ENCODE measurements at regions of chr17 and their contacts with region 1.

Region 1: DNA sequence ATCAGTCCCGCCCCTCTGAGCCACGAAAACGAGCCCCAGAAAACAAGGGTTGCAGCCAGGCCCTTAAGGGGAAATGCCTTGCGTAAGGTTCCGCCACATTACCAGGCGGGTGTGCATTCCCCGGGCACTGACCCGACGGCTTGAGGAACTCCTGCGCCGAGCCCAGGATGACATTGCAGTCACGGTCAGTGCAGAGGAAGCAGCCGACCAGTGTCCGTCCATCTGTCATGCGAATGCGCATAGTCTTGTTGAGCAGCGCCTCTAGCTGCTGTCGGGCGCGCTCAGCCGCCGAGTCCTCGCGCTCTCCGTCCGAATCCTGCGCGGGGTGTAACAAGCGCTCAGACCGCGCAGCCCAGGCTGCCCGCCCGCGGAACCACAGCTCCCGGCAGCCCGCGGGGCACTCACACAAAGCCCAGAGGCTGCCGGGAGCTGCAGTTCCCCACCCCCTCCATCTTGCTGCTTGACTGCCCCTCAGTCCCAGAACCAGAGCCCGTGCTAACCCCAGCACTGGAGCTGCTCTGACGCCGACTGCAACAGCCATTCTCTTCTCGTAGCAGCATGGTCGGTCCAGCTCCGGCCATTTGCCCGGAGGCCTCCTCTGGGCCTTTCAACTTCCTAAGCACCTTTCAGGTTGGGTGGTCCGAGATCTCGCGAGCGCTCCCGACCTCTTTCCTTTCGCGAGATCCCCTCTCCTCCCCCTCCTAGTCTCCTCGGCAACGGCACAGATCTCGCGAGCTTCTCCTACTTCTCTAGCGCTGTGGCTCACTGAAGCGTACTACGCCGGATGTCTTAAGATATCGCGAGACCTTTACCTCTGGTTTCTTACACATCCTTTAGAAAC is at the start of gene NAA38:
- DNase-seq: peak; percentile 88 to 98 (median 95)
- ATAC-seq: peak; percentile 83 to 90 (median 88)
- H3K4me3 ChIP-seq: peak within 1 kb of the TSS; percentile 72 to 83
- H3K4me3 Mint-ChIP-seq: no peak within 1 kb of the TSS
- H3K27ac ChIP-seq: peak within 1 kb of the TSS; percentile 89
- H3K27ac Mint-ChIP-seq: no peak within 1 kb of the TSS
- H3K4me1 ChIP-seq: peaks cover 12 to 39% of the 10 kb centered on the region in 2 experiments
- H3K4me1 Mint-ChIP-seq: peaks cover under 1 to 8% (median 5%) of the 10 kb centered on the region in 3 donors
- H3K27me3 ChIP-seq: no peaks in the 10 kb centered on the region
- H3K27me3 Mint-ChIP-seq: no peaks in the 10 kb centered on the region
- total RNA-seq, gene NAA38: 15.8 to 40.6 (median 33.6) TPM

Region 2: GRCh38 chr17:7774037-7774659 is 83.0 kb before region 1 on chr17:
- CTCF ChIA-PET with region 1: no interaction called
- POLR2A ChIA-PET with region 1: no interaction called
- DNase-seq: no peak
- ATAC-seq: no peak
- H3K4me3 ChIP-seq: no peak overlapping the region
- H3K4me3 Mint-ChIP-seq: no peak overlapping the region
- H3K27ac ChIP-seq: no peak overlapping the region
- H3K27ac Mint-ChIP-seq: no peak overlapping the region
- H3K4me1 ChIP-seq: no peaks in the 10 kb centered on the region
- H3K4me1 Mint-ChIP-seq: no peaks in the 10 kb centered on the region
- H3K27me3 ChIP-seq: peaks cover 0 to 55% of the 10 kb centered on the region in 2 experiments
- H3K27me3 Mint-ChIP-seq: peaks cover 30 to 59% of the 10 kb centered on the region in 2 donors

Region 3: DNA sequence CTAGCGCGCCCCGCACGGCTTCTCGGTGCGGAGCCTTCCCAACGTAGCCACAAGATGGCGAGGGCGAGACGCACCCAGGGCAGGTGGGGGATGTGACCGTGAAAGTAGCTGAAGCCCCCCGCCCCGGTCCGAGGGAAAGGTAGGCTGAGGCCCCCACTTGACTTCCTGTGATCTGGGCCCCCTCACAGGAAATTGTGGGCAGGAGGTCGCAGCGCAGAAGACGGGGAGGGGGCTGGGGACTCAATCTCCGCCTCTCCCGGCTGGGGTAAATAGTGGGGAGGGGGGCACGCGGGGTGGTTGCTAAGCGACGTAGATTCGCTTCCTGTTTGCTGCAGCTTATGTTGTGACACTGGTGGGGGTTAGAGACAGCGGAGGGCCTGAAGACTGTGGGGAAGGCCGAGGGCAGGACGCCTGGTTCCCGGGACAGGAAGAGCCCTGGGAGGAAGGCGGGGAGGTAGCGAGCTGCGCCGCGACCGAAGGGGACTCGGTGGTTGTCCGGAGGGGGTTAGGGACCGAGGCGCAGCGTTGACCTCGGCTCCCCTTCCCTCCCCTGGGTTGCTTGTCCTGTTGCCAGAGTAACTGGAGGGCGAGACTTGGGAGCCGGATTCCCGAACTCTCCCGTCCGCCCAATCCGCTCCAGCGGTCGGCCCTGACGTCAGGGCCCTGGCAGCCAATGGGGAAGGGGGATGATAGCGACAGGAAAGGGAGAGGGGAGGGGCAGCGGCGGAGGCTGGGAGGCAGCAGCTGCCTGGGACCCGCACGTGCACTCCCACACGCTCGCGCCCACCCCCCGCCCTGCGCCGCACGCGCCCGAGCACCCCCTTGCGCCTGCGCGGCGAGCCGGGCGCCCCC is 21.9 kb before region 1 on chr17:
- CTCF ChIA-PET with region 1: interaction called, 3 to 7 read pairs
- POLR2A ChIA-PET with region 1: interaction called in 1 of 2 experiments, 11 read pairs
- DNase-seq: peak; percentile 67 to 95 (median 90)
- ATAC-seq: peak; percentile 56 to 65 (median 60)
- H3K4me3 ChIP-seq: peak overlapping the region; percentile 90 to 95
- H3K4me3 Mint-ChIP-seq: peak overlapping the region; percentile 98 to 100 (median 98)
- H3K27ac ChIP-seq: peak overlapping the region; percentile 100
- H3K27ac Mint-ChIP-seq: peak overlapping the region; percentile 97
- H3K4me1 ChIP-seq: peaks cover 32 to 63% of the 10 kb centered on the region in 2 experiments
- H3K4me1 Mint-ChIP-seq: peaks cover 45 to 50% (median 46%) of the 10 kb centered on the region in 3 donors
- H3K27me3 ChIP-seq: peaks cover 0 to 16% of the 10 kb centered on the region in 2 experiments
- H3K27me3 Mint-ChIP-seq: peaks cover 0 to 1% of the 10 kb centered on the region in 2 donors

Region 4: GRCh38 chr17:7844292-7845154 is 12.6 kb before region 1 on chr17:
- CTCF ChIA-PET with region 1: interaction called, 3 to 9 read pairs
- POLR2A ChIA-PET with region 1: interaction called, 9 to 13 read pairs
- DNase-seq: peak in 34 of 35 experiments; percentile 61 to 90 (median 74)
- ATAC-seq: peak; percentile 23 to 51 (median 42)
- H3K4me3 ChIP-seq: peak overlapping the region; percentile 87 to 91
- H3K4me3 Mint-ChIP-seq: peak overlapping the region; percentile 87 to 100 (median 94)
- H3K27ac ChIP-seq: peak overlapping the region; percentile 100
- H3K27ac Mint-ChIP-seq: peak overlapping the region; percentile 96 to 98
- H3K4me1 ChIP-seq: peaks cover 31 to 59% of the 10 kb centered on the region in 2 experiments
- H3K4me1 Mint-ChIP-seq: peaks cover 39 to 56% (median 50%) of the 10 kb centered on the region in 3 donors
- H3K27me3 ChIP-seq: no peaks in the 10 kb centered on the region
- H3K27me3 Mint-ChIP-seq: no peaks in the 10 kb centered on the region

Region 5: DNA sequence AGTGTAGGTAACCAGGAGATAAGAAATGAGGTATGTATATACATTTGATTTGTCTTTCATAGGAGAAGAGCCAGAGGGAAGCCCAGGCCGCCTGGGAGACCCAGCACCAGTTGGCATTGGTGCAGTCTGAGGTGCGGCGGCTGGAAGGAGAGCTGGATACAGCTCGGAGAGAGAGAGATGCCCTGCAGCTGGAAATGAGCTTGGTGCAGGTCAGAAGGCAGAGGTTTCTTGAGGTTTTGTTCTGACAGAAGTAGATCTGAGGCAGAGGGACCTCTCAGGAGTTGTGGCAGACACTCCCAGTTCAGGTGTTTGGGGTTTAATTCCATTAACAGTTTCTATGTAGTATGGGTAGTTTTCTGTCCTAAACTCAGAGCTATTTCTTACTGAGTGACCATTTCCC is 82.9 kb after region 1 on chr17:
- CTCF ChIA-PET with region 1: no interaction called
- POLR2A ChIA-PET with region 1: no interaction called
- DNase-seq: no peak
- ATAC-seq: no peak
- H3K4me3 ChIP-seq: no peak overlapping the region
- H3K4me3 Mint-ChIP-seq: no peak overlapping the region
- H3K27ac ChIP-seq: no peak overlapping the region
- H3K27ac Mint-ChIP-seq: no peak overlapping the region
- H3K4me1 ChIP-seq: no peaks in the 10 kb centered on the region
- H3K4me1 Mint-ChIP-seq: peaks cover 3 to 6% (median 5%) of the 10 kb centered on the region in 3 donors
- H3K27me3 ChIP-seq: no peaks in the 10 kb centered on the region
- H3K27me3 Mint-ChIP-seq: no peaks in the 10 kb centered on the region

Region 6: GRCh38 chr17:8001976-8002720 is 145.0 kb after region 1 on chr17 and contains the start of gene GUCY2D:
- CTCF ChIA-PET with region 1: no interaction called
- POLR2A ChIA-PET with region 1: no interaction called
- DNase-seq: peak in 1 of 35 experiments; percentile 29
- ATAC-seq: peak in 3 of 4 experiments; percentile 23 to 40 (median 34)
- H3K4me3 ChIP-seq: peak within 1 kb of the TSS in 1 of 2 donors; percentile 33
- H3K4me3 Mint-ChIP-seq: peak within 1 kb of the TSS; percentile 34 to 72 (median 48)
- H3K27ac ChIP-seq: no peak within 1 kb of the TSS
- H3K27ac Mint-ChIP-seq: no peak within 1 kb of the TSS
- H3K4me1 ChIP-seq: peaks cover 0 to 14% of the 10 kb centered on the region in 2 experiments
- H3K4me1 Mint-ChIP-seq: peaks cover 8 to 12% (median 9%) of the 10 kb centered on the region in 3 donors
- H3K27me3 ChIP-seq: peaks cover 3 to 65% of the 10 kb centered on the region in 2 experiments
- H3K27me3 Mint-ChIP-seq: peaks cover 37 to 51% of the 10 kb centered on the region in 2 donors
- total RNA-seq, gene GUCY2D: 0.06 TPM in 1 of 5 donors, not detected in the others

Measured in T-cell (primary cell).